Activated CD4-positive, alpha-beta T cell treated with anti-CD3 and anti-CD28 coated beads for 36 hours (primary cell): ENCODE measurements at regions of chr3 and their contacts with region 1.

Region 1: DNA sequence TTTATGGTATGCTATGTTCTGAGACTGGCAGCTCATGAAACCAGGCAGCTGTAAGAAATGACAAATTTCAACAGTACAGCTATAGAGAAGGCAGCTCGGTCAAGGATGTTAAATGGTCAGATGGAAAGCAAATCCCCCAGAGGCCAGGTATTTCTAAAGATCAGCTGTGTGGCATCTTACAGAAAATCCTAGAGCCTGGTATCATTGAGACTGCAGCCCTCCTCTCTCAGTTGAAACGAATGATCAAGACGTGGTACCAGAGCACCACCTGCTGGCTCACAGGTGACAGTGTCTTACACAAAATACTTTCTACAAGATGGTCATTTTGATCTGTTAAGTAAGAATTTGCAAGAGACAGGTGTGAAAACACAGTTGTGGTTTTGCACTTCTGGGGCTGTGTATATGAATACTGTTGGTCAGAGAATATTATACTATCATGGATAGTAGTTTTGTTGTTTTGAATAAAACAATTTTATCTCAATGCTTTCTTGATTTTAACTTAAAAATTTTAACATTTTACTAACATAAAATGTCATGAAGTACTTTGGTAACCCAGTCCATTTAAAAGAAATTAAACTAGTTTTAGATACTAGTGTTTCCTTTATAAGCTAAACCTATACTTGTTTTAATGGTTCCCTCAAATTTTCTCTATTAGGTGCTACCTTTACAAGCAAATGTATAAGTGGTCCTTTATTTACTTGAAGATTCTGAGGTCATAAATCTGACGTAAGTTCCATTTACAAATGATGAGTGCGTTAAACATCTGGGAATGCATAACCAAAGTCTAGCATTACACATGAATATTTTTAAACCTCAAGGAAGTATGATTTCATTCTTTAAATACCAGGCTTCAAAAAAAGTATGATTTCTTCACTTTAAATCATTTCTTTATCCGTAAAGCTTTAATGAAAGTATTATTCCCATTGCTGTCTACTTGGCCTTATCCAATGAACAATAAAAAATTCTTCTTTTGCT is 121.8 kb downstream of the PDZRN3 start:
- DNase-seq: peak; percentile 77
- ATAC-seq: peak; percentile 58
- H3K4me3 Mint-ChIP-seq: no peak overlapping the region
- H3K27ac Mint-ChIP-seq: no peak overlapping the region
- H3K4me1 Mint-ChIP-seq: no peaks in the 10 kb centered on the region
- H3K27me3 Mint-ChIP-seq: peaks cover 21% of the 10 kb centered on the region

Region 2: GRCh38 chr3:72255791-72256559 is 1246.9 kb before region 1 on chr3:
- CTCF ChIA-PET with region 1: no interaction called
- POLR2A ChIA-PET with region 1: no interaction called
- intact Hi-C with region 1: no loop called
- DNase-seq: peak; percentile 54
- ATAC-seq: no peak
- H3K4me3 Mint-ChIP-seq: no peak overlapping the region
- H3K27ac Mint-ChIP-seq: no peak overlapping the region
- H3K4me1 Mint-ChIP-seq: peaks cover 43% of the 10 kb centered on the region
- H3K27me3 Mint-ChIP-seq: peaks cover 2% of the 10 kb centered on the region

Region 3: DNA sequence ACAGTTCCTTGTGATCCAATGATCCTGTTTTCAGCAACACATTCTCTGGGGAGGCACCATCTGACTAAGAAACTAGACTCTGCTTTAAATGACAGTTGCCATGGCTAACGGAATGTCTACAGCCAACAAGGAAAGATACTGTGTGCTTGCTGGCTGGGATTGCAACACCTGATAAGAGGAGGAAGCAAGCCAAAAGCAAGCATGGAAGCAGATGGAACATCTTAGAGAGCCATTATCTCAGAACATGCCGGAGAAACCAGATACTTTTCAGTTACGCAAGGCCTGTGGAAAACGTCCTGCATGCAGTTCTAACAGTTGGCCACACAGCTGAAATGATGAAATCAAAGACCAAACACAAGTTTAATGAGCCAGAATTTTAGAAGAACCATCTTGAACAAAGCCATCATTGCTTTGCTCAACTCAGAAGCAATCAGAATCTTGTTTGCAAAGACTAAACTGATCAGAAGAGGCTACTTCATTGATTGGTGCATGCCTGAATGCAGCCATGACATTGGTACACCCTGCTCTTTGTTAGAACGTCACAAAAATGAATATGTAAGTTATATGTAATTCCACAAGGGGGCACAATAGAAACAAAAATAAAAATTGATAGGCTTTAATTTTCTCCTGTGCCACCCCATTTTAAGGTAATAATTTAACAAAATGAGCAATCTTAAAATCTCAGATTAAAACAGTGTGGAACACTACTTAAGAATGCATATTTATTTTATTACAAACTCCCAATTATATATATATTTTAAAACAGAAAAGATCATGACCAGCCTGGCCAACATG is 564.2 kb before region 1 on chr3:
- CTCF ChIA-PET with region 1: no interaction called
- POLR2A ChIA-PET with region 1: no interaction called
- intact Hi-C with region 1: loop called in 1 of 2 experiments (anchors 10 kb)
- DNase-seq: peak; percentile 44
- ATAC-seq: peak; percentile 98
- H3K4me3 Mint-ChIP-seq: no peak overlapping the region
- H3K27ac Mint-ChIP-seq: no peak overlapping the region
- H3K4me1 Mint-ChIP-seq: no peaks in the 10 kb centered on the region
- H3K27me3 Mint-ChIP-seq: no peaks in the 10 kb centered on the region

Region 4: GRCh38 chr3:73094951-73095350 is 407.9 kb before region 1 on chr3:
- CTCF ChIA-PET with region 1: interaction called, 40 read pairs
- POLR2A ChIA-PET with region 1: no interaction called
- intact Hi-C with region 1: no loop called
- DNase-seq: no peak
- ATAC-seq: no peak
- H3K4me3 Mint-ChIP-seq: no peak overlapping the region
- H3K27ac Mint-ChIP-seq: no peak overlapping the region
- H3K4me1 Mint-ChIP-seq: peaks cover 7% of the 10 kb centered on the region
- H3K27me3 Mint-ChIP-seq: peaks cover 3% of the 10 kb centered on the region

Region 5: GRCh38 chr3:73100741-73101559 is 401.9 kb before region 1 on chr3:
- CTCF ChIA-PET with region 1: interaction called, 40 read pairs
- POLR2A ChIA-PET with region 1: no interaction called
- intact Hi-C with region 1: loop called (anchors 1 kb)
- DNase-seq: peak; percentile 88
- ATAC-seq: peak; percentile 72
- H3K4me3 Mint-ChIP-seq: no peak overlapping the region
- H3K27ac Mint-ChIP-seq: no peak overlapping the region
- H3K4me1 Mint-ChIP-seq: no peaks in the 10 kb centered on the region
- H3K27me3 Mint-ChIP-seq: peaks cover 2% of the 10 kb centered on the region

Region 6: DNA sequence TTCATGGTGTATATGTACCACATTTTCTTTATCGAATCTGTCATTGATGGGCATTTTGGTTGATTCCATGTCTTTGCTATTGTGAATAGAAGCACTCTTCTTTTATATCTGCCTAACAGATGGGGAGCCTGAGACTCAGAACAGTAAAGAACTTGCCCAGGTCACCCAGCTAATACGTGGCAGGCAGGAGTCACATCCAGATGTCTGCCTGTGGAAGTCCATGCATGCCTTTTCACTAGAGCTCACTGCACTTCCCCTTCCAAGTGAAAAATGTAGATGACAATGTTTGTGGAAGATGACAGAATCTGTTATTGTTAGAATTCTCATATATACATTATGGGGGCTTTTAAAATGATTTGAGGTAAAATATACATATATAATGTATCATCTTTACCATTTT is 43.2 kb before region 1 on chr3:
- CTCF ChIA-PET with region 1: no interaction called
- POLR2A ChIA-PET with region 1: no interaction called
- intact Hi-C with region 1: loop called in 1 of 2 experiments (anchors 5 kb)
- DNase-seq: no peak
- ATAC-seq: no peak
- H3K4me3 Mint-ChIP-seq: no peak overlapping the region
- H3K27ac Mint-ChIP-seq: no peak overlapping the region
- H3K4me1 Mint-ChIP-seq: no peaks in the 10 kb centered on the region
- H3K27me3 Mint-ChIP-seq: peaks cover 13% of the 10 kb centered on the region

Region 7: DNA sequence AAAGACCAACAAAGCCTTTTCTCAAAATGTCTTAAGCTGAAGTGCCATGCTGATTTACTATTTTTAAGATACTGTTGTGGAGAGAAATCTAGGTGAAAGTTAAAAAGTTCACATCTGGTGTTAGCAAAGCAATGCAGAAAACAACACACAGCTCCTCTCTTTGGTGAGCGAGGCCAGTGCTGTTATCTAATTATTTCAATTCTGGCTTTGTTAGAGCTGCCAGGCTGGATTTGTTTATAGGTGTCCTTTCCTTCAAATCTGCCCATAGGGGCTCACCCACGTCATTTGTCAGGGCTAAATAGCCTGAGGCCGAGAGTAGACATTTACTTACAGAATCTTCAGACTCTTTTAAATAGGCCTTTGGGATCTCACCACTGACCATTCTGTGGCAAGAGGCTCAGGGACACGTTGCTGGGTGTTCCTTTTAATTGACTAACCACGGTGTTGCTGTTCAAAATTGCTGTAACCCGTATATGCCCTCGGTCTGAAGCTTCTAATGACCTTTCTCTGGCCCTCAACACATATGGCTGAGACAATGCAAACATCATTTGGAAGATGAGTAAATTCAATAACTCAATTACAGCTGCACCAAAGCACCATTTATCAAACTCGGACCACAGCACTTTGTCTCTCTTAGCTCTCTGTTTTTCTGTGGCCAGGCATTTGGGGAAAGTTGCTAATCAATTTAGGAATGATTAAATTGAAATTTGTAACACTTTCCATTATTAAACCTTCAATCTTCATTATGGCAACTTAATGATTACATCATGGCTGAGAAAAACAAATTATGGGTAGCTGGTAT is 30.7 kb before region 1 on chr3:
- CTCF ChIA-PET with region 1: no interaction called
- POLR2A ChIA-PET with region 1: no interaction called
- intact Hi-C with region 1: no loop called
- DNase-seq: no peak
- ATAC-seq: no peak
- H3K4me3 Mint-ChIP-seq: no peak overlapping the region
- H3K27ac Mint-ChIP-seq: no peak overlapping the region
- H3K4me1 Mint-ChIP-seq: no peaks in the 10 kb centered on the region
- H3K27me3 Mint-ChIP-seq: peaks cover 12% of the 10 kb centered on the region